K562 (cell line): ENCODE measurements at regions of chr3 and their contacts with region 1.

Region 1: DNA sequence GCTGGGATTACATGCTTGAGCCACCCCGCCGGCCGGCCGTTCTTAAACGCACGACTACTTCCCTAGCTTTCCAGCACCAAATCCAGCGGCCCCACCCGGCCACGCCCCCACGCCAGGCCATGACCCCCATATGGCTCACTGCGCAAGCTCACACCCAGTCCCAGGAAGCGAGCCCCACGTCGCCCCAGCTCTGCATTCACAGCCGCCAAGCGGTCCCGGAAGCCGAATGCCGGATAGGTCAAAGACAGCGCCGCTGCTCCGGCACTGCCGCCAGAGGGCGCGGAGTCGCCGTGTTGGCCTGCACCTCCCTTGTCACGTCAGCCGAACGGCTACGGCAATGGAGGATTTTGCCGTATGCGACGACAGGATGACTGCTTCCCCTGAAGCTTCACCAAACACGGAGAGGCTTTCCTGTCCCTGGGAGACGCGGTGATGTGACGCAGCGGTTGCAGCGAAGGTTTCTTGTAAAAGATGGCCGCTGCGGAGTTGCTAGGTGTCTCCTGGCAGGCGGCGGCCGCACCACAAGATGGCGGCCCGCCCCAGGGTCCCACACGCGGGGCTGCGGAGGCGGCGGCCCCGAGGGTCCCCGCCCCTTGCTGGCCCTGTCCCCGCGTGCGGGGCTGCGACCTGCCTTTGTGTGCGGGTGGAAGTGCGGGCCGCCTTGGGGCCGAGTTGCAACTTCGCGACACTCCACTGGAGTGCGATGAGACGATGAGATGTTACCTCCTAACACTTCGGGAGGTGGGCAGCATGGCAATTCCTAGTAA is 30.2 kb upstream of the RPN1 start:
- DNase-seq: peak; percentile 92 to 97 (median 94)
- ATAC-seq: peak; percentile 99
- H3K4me3 ChIP-seq: peak overlapping the region; percentile 49
- H3K27ac ChIP-seq: peak overlapping the region; percentile 100
- H3K4me1 ChIP-seq: peaks cover 6 to 8% of the 10 kb centered on the region in 2 experiments; a peak in 4 of 5 replicates
- H3K27me3 ChIP-seq: no peaks in the 10 kb centered on the region
- CTCF ChIP-seq: peak; percentile 89 to 97 (median 92)
- EP300 ChIP-seq: no peak
- POLR2A ChIP-seq: peak; percentile 89
- RAD21 ChIP-seq: peak; percentile 80 to 81

Region 2: GRCh38 chr3:128650096-128651050 is 30.4 kb before region 1 on chr3 and contains the start of gene RPN1:
- CTCF ChIA-PET with region 1: no interaction called
- POLR2A ChIA-PET with region 1: interaction called, 10 read pairs
- in situ Hi-C with region 1: no loop called
- intact Hi-C with region 1: no loop called
- DNase-seq: peak; percentile 82 to 93 (median 88)
- ATAC-seq: peak; percentile 98
- H3K4me3 ChIP-seq: peak within 1 kb of the TSS; percentile 99
- H3K27ac ChIP-seq: peak within 1 kb of the TSS; percentile 99
- H3K4me1 ChIP-seq: peaks cover 0 to 4% of the 10 kb centered on the region in 2 experiments; a peak in 1 of 5 replicates
- H3K27me3 ChIP-seq: no peaks in the 10 kb centered on the region
- CTCF ChIP-seq: no peak
- EP300 ChIP-seq: no peak
- POLR2A ChIP-seq: peak; percentile 91
- RAD21 ChIP-seq: no peak
- polyA plus RNA-seq, gene RPN1: 39.5 to 58.4 TPM

Region 3: DNA sequence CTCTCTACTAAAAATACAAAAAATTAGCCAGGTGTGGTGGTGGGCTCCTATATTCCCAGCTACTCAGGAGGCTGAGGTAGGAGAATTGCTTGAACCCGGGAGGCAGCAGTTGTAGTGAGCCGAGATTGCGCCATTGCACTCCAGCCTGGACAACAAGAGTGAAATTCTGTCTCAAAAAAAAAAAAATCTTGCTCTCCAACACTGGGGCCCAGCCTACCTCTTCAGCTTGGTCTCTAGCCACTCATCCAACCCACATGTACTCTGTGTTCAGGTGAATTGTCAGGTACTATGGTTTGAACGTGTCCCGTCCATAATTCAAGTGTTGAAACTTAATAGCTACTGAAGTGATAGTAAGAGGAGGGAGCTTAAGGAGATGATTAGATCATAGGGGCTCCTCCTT is 22.8 kb after region 1 on chr3:
- CTCF ChIA-PET with region 1: no interaction called
- POLR2A ChIA-PET with region 1: interaction called, 10 read pairs
- in situ Hi-C with region 1: no loop called
- intact Hi-C with region 1: no loop called
- DNase-seq: no peak
- ATAC-seq: no peak
- H3K4me3 ChIP-seq: no peak overlapping the region
- H3K27ac ChIP-seq: no peak overlapping the region
- H3K4me1 ChIP-seq: no peaks in the 10 kb centered on the region; a peak in 2 of 5 replicates
- H3K27me3 ChIP-seq: no peaks in the 10 kb centered on the region
- CTCF ChIP-seq: no peak
- EP300 ChIP-seq: no peak
- POLR2A ChIP-seq: no peak
- RAD21 ChIP-seq: no peak

Region 4: GRCh38 chr3:128725932-128726690 is 45.3 kb after region 1 on chr3 and contains the start of gene RAB7A:
- CTCF ChIA-PET with region 1: no interaction called
- POLR2A ChIA-PET with region 1: interaction called, 6 read pairs
- in situ Hi-C with region 1: no loop called
- intact Hi-C with region 1: loop called (anchors 1 kb)
- DNase-seq: peak; percentile 83 to 97 (median 88)
- ATAC-seq: peak; percentile 90
- H3K4me3 ChIP-seq: peak within 1 kb of the TSS; percentile 99
- H3K27ac ChIP-seq: peak within 1 kb of the TSS; percentile 92
- H3K4me1 ChIP-seq: peaks cover 25 to 39% of the 10 kb centered on the region in 2 experiments
- H3K27me3 ChIP-seq: no peaks in the 10 kb centered on the region
- CTCF ChIP-seq: no peak
- EP300 ChIP-seq: peak; percentile 53
- POLR2A ChIP-seq: peak; percentile 86
- RAD21 ChIP-seq: no peak
- polyA plus RNA-seq, gene RAB7A: 30.9 to 36.1 TPM

Region 5: GRCh38 chr3:128794770-128795649 is 114.2 kb after region 1 on chr3:
- CTCF ChIA-PET with region 1: interaction called, 12 read pairs
- POLR2A ChIA-PET with region 1: interaction called, 4 read pairs
- in situ Hi-C with region 1: no loop called
- intact Hi-C with region 1: loop called (anchors 1 kb)
- DNase-seq: peak; percentile 61 to 69 (median 64)
- ATAC-seq: peak; percentile 99
- H3K4me3 ChIP-seq: no peak overlapping the region
- H3K27ac ChIP-seq: peak overlapping the region; percentile 51; the same call in 1 of the 3 replicates
- H3K4me1 ChIP-seq: peaks cover 0 to 17% of the 10 kb centered on the region in 2 experiments; a peak in 3 of 5 replicates
- H3K27me3 ChIP-seq: no peaks in the 10 kb centered on the region
- CTCF ChIP-seq: peak; percentile 62 to 78 (median 72)
- EP300 ChIP-seq: no peak
- POLR2A ChIP-seq: no peak
- RAD21 ChIP-seq: peak; percentile 49 to 71

Region 6: GRCh38 chr3:128845778-128846485 is 165.1 kb after region 1 on chr3:
- CTCF ChIA-PET with region 1: interaction called, 3 read pairs
- POLR2A ChIA-PET with region 1: no interaction called
- in situ Hi-C with region 1: no loop called
- intact Hi-C with region 1: loop called (anchors 5 kb)
- DNase-seq: peak; percentile 85 to 92 (median 89)
- ATAC-seq: peak; percentile 95
- H3K4me3 ChIP-seq: peak overlapping the region; percentile 8; the same call in 1 of the 2 replicates
- H3K27ac ChIP-seq: peak overlapping the region; percentile 66
- H3K4me1 ChIP-seq: peaks cover 13 to 45% of the 10 kb centered on the region in 2 experiments; a peak in 4 of 5 replicates
- H3K27me3 ChIP-seq: no peaks in the 10 kb centered on the region
- CTCF ChIP-seq: peak; percentile 60 to 82 (median 71)
- EP300 ChIP-seq: peak; percentile 72
- POLR2A ChIP-seq: no peak
- RAD21 ChIP-seq: peak; percentile 55 to 63